Activated naive CD4-positive, alpha-beta T cell treated with anti-CD3 and anti-CD28 coated beads for 36 hours (primary cell): ENCODE measurements at regions of chr15 and their contacts with region 1.

Region 1: GRCh38 chr15:41999290-42000285 is 21.3 kb downstream of the PLA2G4E start:
- DNase-seq: no peak
- H3K4me3 Mint-ChIP-seq: no peak overlapping the region
- H3K27ac Mint-ChIP-seq: no peak overlapping the region
- H3K4me1 Mint-ChIP-seq: no peaks in the 10 kb centered on the region
- H3K27me3 Mint-ChIP-seq: no peaks in the 10 kb centered on the region

Region 2: GRCh38 chr15:42056934-42057779 is 57.6 kb after region 1 on chr15:
- CTCF ChIA-PET with region 1: interaction called, 10 read pairs
- intact Hi-C with region 1: no loop called
- DNase-seq: peak; percentile 73
- H3K4me3 Mint-ChIP-seq: peak overlapping the region; percentile 33
- H3K27ac Mint-ChIP-seq: no peak overlapping the region
- H3K4me1 Mint-ChIP-seq: peaks cover 13% of the 10 kb centered on the region
- H3K27me3 Mint-ChIP-seq: peaks cover 20% of the 10 kb centered on the region

Region 3: DNA sequence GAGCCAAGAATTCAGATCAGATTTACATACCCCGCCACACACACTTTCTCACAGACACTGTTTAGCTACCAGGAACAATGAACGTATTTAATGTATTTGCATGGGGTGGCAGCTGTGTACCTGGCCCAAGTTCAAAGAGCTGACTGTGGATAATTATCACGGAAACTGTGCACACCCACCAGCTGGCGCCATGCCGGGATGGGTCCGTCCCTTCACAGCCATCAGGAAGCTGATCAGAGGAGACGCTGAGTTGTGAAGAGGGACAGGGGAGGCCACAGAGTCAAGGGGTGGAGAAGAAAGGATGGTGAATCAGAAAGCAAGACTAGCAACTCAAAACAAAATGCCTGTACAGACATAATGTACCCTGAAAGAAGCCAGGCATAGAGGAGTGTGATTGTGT is 107.9 kb after region 1 on chr15:
- CTCF ChIA-PET with region 1: no interaction called
- intact Hi-C with region 1: no loop called
- DNase-seq: peak; percentile 89
- H3K4me3 Mint-ChIP-seq: no peak overlapping the region
- H3K27ac Mint-ChIP-seq: peak overlapping the region; percentile 22
- H3K4me1 Mint-ChIP-seq: peaks cover 22% of the 10 kb centered on the region
- H3K27me3 Mint-ChIP-seq: peaks cover 16% of the 10 kb centered on the region